ENCODE measurements at regions of chr19 and their contacts with region 1.

Region 1: GRCh38 chr19:29610563-29611271 is 4.6 kb downstream of the POP4 start:
- DNase-seq: peak; percentile 82
- ATAC-seq: peak; percentile 80 to 85
- H3K4me3 ChIP-seq: no peak overlapping the region
- H3K27ac ChIP-seq: no peak overlapping the region
- H3K4me1 ChIP-seq: peaks cover 14% of the 10 kb centered on the region
- H3K27me3 ChIP-seq: no peaks in the 10 kb centered on the region
- CTCF ChIP-seq: peak; percentile 91

Region 2: DNA sequence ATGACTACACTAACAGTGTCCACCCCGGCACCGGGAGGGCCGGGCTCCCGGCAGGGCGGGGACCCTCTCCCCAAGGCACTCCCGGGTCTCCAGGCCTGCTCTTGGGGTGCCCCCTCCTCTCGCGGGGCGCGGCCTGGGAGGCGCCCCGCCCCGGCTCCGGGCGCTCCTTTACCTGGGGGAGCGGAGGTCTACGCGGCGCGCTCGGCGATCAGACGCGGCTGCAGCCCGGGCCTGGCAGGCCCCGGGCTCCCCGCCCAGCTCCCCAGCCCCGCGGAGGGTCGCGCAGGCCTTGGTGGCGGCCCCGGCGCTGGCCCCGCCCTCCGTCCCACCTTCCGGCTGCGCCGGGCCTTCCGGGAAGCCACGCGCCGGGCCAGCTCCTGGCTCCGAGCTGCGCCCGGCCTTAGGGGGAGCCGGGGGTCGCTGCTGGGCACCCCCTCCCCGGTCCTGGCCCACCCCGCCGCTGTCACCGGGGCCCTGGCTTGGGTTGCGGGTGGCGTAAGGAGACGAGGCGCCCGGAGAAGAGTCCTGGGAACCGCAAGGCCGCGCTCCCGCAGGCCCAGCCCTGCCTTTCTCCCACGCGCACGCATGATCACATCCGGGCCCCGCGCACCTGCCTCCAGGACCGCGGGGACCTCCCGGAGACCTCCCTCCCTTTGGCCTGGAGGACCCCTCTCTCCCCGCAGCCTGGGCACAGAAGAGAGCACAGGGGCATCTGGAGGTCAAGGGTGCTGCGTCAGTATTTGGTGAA is 104.4 kb after region 1 on chr19 and contains the start of gene C19orf12:
- intact Hi-C with region 1: loop called (anchors 10 kb)
- DNase-seq: peak; percentile 76
- ATAC-seq: peak; percentile 90 to 93
- H3K4me3 ChIP-seq: peak within 1 kb of the TSS; percentile 88
- H3K27ac ChIP-seq: peak within 1 kb of the TSS; percentile 97
- H3K4me1 ChIP-seq: peaks cover 32% of the 10 kb centered on the region
- H3K27me3 ChIP-seq: no peaks in the 10 kb centered on the region
- CTCF ChIP-seq: no peak
- total RNA-seq, gene C19orf12: 19.2 TPM

Measured in lower lobe of right lung (tissue), 2 donors.